ENCODE measurements at regions of chr22 and their contacts with region 1.

Region 1: GRCh38 chr22:30920407-30920806 is 48.2 kb downstream of the MORC2 start:
- DNase-seq: peak; percentile 73 to 78 (median 76)
- ATAC-seq: peak; percentile 91
- H3K4me3 ChIP-seq: no peak overlapping the region
- H3K27ac ChIP-seq: no peak overlapping the region
- H3K4me1 ChIP-seq: no peaks in the 10 kb centered on the region
- H3K27me3 ChIP-seq: no peaks in the 10 kb centered on the region
- CTCF ChIP-seq: peak; percentile 74 to 89 (median 84)
- EP300 ChIP-seq: no peak
- POLR2A ChIP-seq: no peak
- RAD21 ChIP-seq: peak; percentile 76 to 80

Region 2: DNA sequence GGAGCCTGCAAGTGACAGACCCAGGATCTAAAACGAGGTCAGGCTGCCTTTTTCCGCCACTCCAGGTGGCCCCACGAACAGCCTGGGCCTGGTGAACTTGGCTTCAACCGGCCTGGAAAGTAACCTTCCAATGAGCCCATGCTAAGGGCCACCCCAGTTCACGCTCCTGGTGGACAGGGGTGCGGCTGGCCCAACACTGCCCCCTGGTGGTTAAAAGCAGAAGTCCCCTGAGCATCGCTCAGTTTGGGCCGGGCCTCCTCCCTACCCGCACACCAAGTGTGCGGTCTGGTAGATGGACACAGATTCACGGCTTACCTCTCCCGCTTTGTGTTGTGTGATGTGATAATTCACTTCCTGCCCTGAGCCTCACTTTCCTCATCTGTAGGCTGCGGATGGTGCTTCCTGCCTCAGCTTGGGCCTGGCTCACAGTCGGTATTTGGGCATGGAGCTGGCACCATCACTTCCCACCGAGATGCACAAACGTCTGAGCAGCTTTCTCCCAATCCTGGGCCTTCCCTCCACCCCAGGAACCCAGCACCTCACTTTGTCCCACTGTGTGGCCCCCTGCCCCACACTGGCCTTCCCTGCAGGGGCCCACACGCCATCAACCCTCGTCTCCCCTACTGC is 434.9 kb before region 1 on chr22:
- CTCF ChIA-PET with region 1: no interaction called
- POLR2A ChIA-PET with region 1: no interaction called
- in situ Hi-C with region 1: no loop called
- intact Hi-C with region 1: no loop called
- DNase-seq: peak; percentile 77 to 92 (median 90)
- ATAC-seq: peak; percentile 99
- H3K4me3 ChIP-seq: no peak overlapping the region
- H3K27ac ChIP-seq: no peak overlapping the region
- H3K4me1 ChIP-seq: peaks cover under 1 to 8% of the 10 kb centered on the region in 2 experiments; a peak in 4 of 5 replicates
- H3K27me3 ChIP-seq: 0 out of 5 replicates have a peak, but pooled peaks cover 0 to 11% of the 10 kb centered on the region in 2 experiments
- CTCF ChIP-seq: peak; percentile 84 to 91 (median 87)
- EP300 ChIP-seq: no peak
- POLR2A ChIP-seq: no peak
- RAD21 ChIP-seq: peak; percentile 76 to 90

Region 3: GRCh38 chr22:30763815-30764686 is 156.4 kb before region 1 on chr22:
- CTCF ChIA-PET with region 1: interaction called, 16 read pairs
- POLR2A ChIA-PET with region 1: interaction called, 3 read pairs
- in situ Hi-C with region 1: loop called (anchors 5 kb)
- intact Hi-C with region 1: loop called (anchors 1 kb)
- DNase-seq: peak; percentile 49 to 75 (median 57)
- ATAC-seq: peak; percentile 80
- H3K4me3 ChIP-seq: no peak overlapping the region
- H3K27ac ChIP-seq: no peak overlapping the region
- H3K4me1 ChIP-seq: no peaks in the 10 kb centered on the region; a peak in 1 of 5 replicates
- H3K27me3 ChIP-seq: peaks cover 0 to 9% of the 10 kb centered on the region in 2 experiments; a peak in 1 of 5 replicates
- CTCF ChIP-seq: peak; percentile 67 to 80 (median 75)
- EP300 ChIP-seq: no peak
- POLR2A ChIP-seq: no peak
- RAD21 ChIP-seq: peak; percentile 67 to 82

Region 4: GRCh38 chr22:30816413-30816812 is 104.0 kb before region 1 on chr22:
- CTCF ChIA-PET with region 1: interaction called, 4 read pairs
- POLR2A ChIA-PET with region 1: interaction called, 3 read pairs
- in situ Hi-C with region 1: no loop called
- intact Hi-C with region 1: loop called (anchors 2 kb)
- DNase-seq: peak in 1 of 4 experiments; percentile 20
- ATAC-seq: 0 out of 3 replicates have a peak, but pooled peaks have one; percentile 60
- H3K4me3 ChIP-seq: no peak overlapping the region
- H3K27ac ChIP-seq: no peak overlapping the region
- H3K4me1 ChIP-seq: no peaks in the 10 kb centered on the region
- H3K27me3 ChIP-seq: peaks cover 8 to 14% of the 10 kb centered on the region in 2 experiments; a peak in 4 of 5 replicates
- CTCF ChIP-seq: peak; percentile 42 to 49 (median 48)
- EP300 ChIP-seq: no peak
- POLR2A ChIP-seq: no peak
- RAD21 ChIP-seq: peak; percentile 39 to 56

Measured in K562 (cell line).